Heart right ventricle (tissue), 16 donors: ENCODE measurements at regions of chr4 and their contacts with region 1.

Region 1: GRCh38 chr4:158259955-158260575 is 49.8 kb downstream of the TMEM144 start:
- DNase-seq: no peak
- ATAC-seq: no peak
- H3K4me3 ChIP-seq: no peak overlapping the region
- H3K27ac ChIP-seq: no peak overlapping the region
- H3K4me1 ChIP-seq: no peaks in the 10 kb centered on the region
- H3K27me3 ChIP-seq: no peaks in the 10 kb centered on the region
- CTCF ChIP-seq: peak in 8 of 9 donors; percentile 5 to 51 (median 35)

Region 2: GRCh38 chr4:157992038-157992705 is 267.9 kb before region 1 on chr4:
- intact Hi-C with region 1: loop called in 6 of 10 experiments (anchors 1 to 10 kb)
- DNase-seq: peak in 1 of 2 donors; percentile 87
- ATAC-seq: peak in 7 of 8 donors; percentile 75 to 94 (median 86)
- H3K4me3 ChIP-seq: peak overlapping the region in 9 of 10 donors; percentile 14 to 54 (median 43)
- H3K27ac ChIP-seq: peak overlapping the region; percentile 42 to 87 (median 74)
- H3K4me1 ChIP-seq: peaks cover 0 to 33% (median 12%) of the 10 kb centered on the region in 9 donors
- H3K27me3 ChIP-seq: no peaks in the 10 kb centered on the region
- CTCF ChIP-seq: peak; percentile 58 to 87 (median 77)

Region 3: DNA sequence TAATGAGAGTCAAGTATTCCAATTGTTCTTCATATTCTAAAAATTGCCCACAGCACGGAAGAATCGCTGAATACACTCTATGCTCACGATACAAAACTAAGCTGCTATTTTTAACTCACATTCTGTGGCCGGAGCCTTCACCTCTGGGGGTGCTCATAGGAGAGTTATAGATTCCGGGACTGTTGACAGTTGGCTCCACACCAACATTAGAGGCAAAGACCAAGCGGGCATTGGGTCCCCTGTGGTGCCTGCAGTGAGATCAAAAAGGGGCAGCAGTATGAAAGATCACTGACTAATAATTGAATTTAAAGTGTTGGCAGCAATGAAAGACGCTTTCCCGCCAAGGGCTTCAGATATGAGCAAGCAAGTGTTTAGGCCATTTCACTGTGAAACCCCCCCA is 96.2 kb after region 1 on chr4:
- intact Hi-C with region 1: no loop called
- DNase-seq: no peak
- ATAC-seq: peak in 1 of 8 donors; percentile 35
- H3K4me3 ChIP-seq: peak overlapping the region in 1 of 10 donors; percentile 5
- H3K27ac ChIP-seq: no peak overlapping the region
- H3K4me1 ChIP-seq: no peaks in the 10 kb centered on the region
- H3K27me3 ChIP-seq: peaks cover 0 to 4% (median 0%) of the 10 kb centered on the region in 7 donors
- CTCF ChIP-seq: no peak